ENCODE measurements at regions of chr1 and their contacts with region 1.

Region 1: DNA sequence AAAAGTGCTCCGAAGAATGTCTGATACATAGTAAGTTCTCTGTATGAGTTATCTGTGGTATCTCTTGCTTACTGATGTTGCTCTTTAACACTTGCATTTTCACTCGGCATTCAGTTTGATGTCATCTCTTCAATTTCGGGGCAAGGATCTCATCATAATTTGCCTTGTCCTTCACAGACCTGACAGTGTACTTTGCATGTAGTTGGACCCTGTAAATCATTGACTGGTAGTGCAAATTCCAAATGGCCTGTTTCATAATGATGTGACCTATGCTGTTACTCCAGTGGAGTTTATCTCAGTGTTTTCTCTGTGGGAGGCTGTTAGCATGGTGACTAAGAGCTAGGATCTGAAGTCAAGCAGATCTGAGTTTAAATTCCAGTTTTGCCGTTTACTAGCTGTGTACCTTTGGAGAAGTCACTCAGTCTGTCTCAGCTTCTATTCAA is 34.2 kb upstream of the ABCD3 start:
- DNase-seq: peak; percentile 99
- ATAC-seq: peak; percentile 92
- H3K4me3 ChIP-seq: peak overlapping the region; percentile 20 to 63 (median 51); a peak in 2 of 6 replicates
- H3K27ac ChIP-seq: peak overlapping the region; percentile 100
- H3K4me1 ChIP-seq: peaks cover 92% of the 10 kb centered on the region
- H3K27me3 ChIP-seq: no peaks in the 10 kb centered on the region; a peak in 1 of 5 replicates
- CTCF ChIP-seq: no peak
- EP300 ChIP-seq: peak; percentile 81 to 98; a peak in 3 of 4 replicates
- POLR2A ChIP-seq: peak; percentile 63 to 89
- RAD21 ChIP-seq: no peak

Region 2: DNA sequence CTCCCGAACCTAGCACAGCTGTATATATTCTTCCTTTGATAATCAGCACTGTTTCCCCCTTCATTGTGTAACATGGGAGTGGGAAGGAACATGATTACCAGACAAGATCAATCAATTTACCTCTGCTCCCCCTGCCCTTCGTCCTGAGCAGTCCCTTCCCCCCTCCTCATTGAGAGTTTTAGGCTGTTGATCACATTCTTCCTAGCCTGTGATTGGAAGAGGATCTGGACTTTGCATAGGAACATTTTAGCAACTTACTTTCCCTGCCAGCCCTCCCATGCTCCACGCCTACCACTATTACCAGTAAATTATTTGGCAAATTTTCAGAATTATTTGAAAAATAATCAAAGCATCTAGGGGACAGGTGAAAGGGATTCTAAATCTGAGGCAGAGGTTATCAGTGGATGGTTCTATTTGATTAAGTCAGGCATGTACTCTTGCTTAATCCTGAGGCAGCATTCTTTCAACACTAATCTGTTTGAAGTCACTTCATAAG is 28.5 kb before region 1 on chr1:
- CTCF ChIA-PET with region 1: no interaction called
- POLR2A ChIA-PET with region 1: interaction called, 4 read pairs
- in situ Hi-C with region 1: no loop called
- intact Hi-C with region 1: loop called (anchors 1 kb)
- DNase-seq: peak; percentile 66
- ATAC-seq: peak; percentile 75
- H3K4me3 ChIP-seq: peak overlapping the region in 2 of 3 experiments; percentile 27 to 44; a peak in 1 of 6 replicates
- H3K27ac ChIP-seq: peak overlapping the region; percentile 55
- H3K4me1 ChIP-seq: peaks cover 61% of the 10 kb centered on the region
- H3K27me3 ChIP-seq: no peaks in the 10 kb centered on the region
- CTCF ChIP-seq: no peak
- EP300 ChIP-seq: peak in 1 of 2 experiments; percentile 65; a peak in 2 of 4 replicates
- POLR2A ChIP-seq: no peak
- RAD21 ChIP-seq: no peak

Region 3: GRCh38 chr1:94396356-94397010 is 12.5 kb after region 1 on chr1:
- CTCF ChIA-PET with region 1: no interaction called
- POLR2A ChIA-PET with region 1: interaction called, 12 read pairs
- in situ Hi-C with region 1: no loop called
- intact Hi-C with region 1: no loop called
- DNase-seq: no peak
- ATAC-seq: peak; percentile 71; the same call in 2 of the 3 replicates
- H3K4me3 ChIP-seq: no peak overlapping the region
- H3K27ac ChIP-seq: no peak overlapping the region
- H3K4me1 ChIP-seq: peaks cover 33% of the 10 kb centered on the region
- H3K27me3 ChIP-seq: no peaks in the 10 kb centered on the region
- CTCF ChIP-seq: peak; percentile 42; the same call in 1 of the 2 replicates
- EP300 ChIP-seq: no peak
- POLR2A ChIP-seq: no peak
- RAD21 ChIP-seq: no peak

Region 4: DNA sequence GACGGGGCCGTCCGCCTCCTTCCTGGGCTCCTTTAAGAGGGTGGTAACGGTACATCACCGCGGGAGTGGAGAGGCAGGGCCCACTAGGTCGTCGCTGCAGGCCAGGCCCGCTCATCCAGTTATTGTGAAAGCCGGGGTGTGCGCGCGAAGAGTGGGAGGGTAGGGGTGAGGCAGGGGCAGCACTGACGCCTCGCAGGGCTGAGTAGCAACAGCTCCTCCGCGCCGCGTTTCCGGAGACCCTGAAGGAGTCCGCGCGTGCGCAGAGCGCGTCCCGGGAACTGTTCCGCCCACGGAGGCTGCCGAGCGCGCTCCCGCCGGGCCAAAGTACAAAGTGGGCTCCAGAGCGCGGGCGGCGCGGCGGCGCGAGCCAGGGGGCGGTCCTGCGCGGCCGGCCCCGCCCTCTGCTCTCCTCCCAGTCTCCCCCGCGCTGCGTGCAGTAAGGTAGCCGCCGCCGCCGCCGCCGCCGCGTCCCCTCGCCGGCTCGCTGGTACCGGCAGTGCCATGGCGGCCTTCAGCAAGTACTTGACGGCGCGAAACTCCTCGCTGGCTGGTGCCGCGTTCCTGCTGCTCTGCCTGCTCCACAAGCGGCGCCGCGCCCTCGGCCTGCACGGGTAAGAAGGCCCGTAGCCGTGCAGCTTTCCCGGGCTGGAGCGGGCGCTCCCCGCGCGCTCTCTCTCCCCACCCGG is 34.1 kb after region 1 on chr1 and contains the start of gene ABCD3:
- CTCF ChIA-PET with region 1: no interaction called
- POLR2A ChIA-PET with region 1: interaction called, 61 read pairs
- in situ Hi-C with region 1: no loop called
- intact Hi-C with region 1: loop called (anchors 1 kb)
- DNase-seq: peak; percentile 93
- ATAC-seq: peak; percentile 91
- H3K4me3 ChIP-seq: peak within 1 kb of the TSS; percentile 93 to 99 (median 95)
- H3K27ac ChIP-seq: peak within 1 kb of the TSS; percentile 99
- H3K4me1 ChIP-seq: peaks cover 56% of the 10 kb centered on the region
- H3K27me3 ChIP-seq: no peaks in the 10 kb centered on the region; a peak in 1 of 5 replicates
- CTCF ChIP-seq: peak; percentile 32
- EP300 ChIP-seq: peak; percentile 65 to 72; a peak in 2 of 4 replicates
- POLR2A ChIP-seq: peak; percentile 74 to 88; a peak in 3 of 4 replicates
- RAD21 ChIP-seq: peak; percentile 35
- total RNA-seq, gene ABCD3: 166 and 190 TPM in 2 replicates

Region 5: GRCh38 chr1:94425821-94426484 is 42.0 kb after region 1 on chr1:
- CTCF ChIA-PET with region 1: no interaction called
- POLR2A ChIA-PET with region 1: interaction called, 16 read pairs
- in situ Hi-C with region 1: no loop called
- intact Hi-C with region 1: loop called (anchors 2 kb)
- DNase-seq: peak; percentile 96
- ATAC-seq: peak; percentile 88
- H3K4me3 ChIP-seq: peak overlapping the region; percentile 34 to 53 (median 48)
- H3K27ac ChIP-seq: peak overlapping the region; percentile 84
- H3K4me1 ChIP-seq: peaks cover 98% of the 10 kb centered on the region
- H3K27me3 ChIP-seq: no peaks in the 10 kb centered on the region
- CTCF ChIP-seq: no peak
- EP300 ChIP-seq: peak in 1 of 2 experiments; percentile 97; a peak in 3 of 4 replicates
- POLR2A ChIP-seq: no peak
- RAD21 ChIP-seq: no peak

Measured in HepG2 (cell line).